ENCODE measurements at regions of chr15 and their contacts with region 1.

Region 1: GRCh38 chr15:30985081-30985531 is 6.3 kb downstream of the MTMR10 start:
- DNase-seq: no peak
- H3K4me3 ChIP-seq: peak overlapping the region in 1 of 4 donors; percentile 4
- H3K27ac ChIP-seq: peak overlapping the region; percentile 21 to 52 (median 48)
- H3K4me1 ChIP-seq: peaks cover 55 to 77% (median 66%) of the 10 kb centered on the region in 4 donors
- H3K27me3 ChIP-seq: no peaks in the 10 kb centered on the region
- CTCF ChIP-seq: no peak
- EP300 ChIP-seq: no peak
- POLR2A ChIP-seq: no peak

Region 2: GRCh38 chr15:30953731-30954378 is 31.3 kb before region 1 on chr15:
- intact Hi-C with region 1: no loop called
- DNase-seq: no peak
- H3K4me3 ChIP-seq: no peak overlapping the region
- H3K27ac ChIP-seq: no peak overlapping the region
- H3K4me1 ChIP-seq: peaks cover 0 to 8% (median 6%) of the 10 kb centered on the region in 4 donors
- H3K27me3 ChIP-seq: no peaks in the 10 kb centered on the region
- CTCF ChIP-seq: no peak
- EP300 ChIP-seq: no peak
- POLR2A ChIP-seq: no peak

Region 3: DNA sequence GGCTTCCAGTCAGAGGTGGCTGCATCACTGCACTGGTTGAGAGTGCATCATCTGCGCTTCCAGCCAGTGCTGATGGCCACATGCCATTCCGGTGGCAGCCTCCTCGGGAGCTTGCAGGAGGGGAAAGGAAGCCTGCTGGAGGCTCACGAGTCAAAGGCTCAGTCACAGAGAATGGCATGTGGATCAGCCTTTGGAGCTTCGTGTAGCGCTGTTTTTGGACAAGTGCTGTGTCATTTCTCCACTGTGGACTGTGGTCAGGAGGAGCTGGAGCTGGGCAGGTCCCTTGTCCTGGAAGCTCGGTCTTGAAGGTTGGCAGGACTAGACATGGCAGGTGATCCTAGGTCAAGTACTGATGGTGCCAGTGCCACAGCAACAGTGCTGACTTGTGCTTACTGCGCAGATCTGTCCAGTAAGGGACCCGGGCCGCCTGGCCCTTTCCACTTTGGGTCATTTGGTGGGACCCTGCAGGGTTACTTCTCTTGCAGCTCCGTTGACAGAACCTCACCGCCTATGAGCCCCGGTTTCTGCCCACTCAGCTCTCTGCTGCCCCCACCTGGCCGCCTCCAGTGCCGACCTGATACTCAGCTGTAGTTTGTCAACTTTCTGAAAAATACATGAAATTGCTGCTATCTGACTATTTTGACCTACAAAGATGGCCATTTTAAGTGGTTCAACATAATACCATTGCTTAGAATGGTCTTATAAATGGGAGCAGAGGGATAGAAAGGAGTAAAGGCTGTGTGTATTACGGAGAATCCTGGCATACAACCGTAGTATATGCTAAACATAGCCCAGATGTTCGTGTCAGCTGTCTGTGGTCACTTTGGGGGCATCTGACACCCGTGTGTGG is 144.0 kb after region 1 on chr15:
- intact Hi-C with region 1: loop called (anchors 10 kb)
- DNase-seq: peak; percentile 92
- H3K4me3 ChIP-seq: no peak overlapping the region
- H3K27ac ChIP-seq: no peak overlapping the region
- H3K4me1 ChIP-seq: peaks cover 0 to 8% (median 5%) of the 10 kb centered on the region in 4 donors
- H3K27me3 ChIP-seq: peaks cover 0 to 8% (median 0%) of the 10 kb centered on the region in 4 donors
- CTCF ChIP-seq: peak; percentile 68 to 89 (median 74)
- EP300 ChIP-seq: no peak
- POLR2A ChIP-seq: no peak

Region 4: GRCh38 chr15:31228985-31229826 is 244.1 kb after region 1 on chr15:
- intact Hi-C with region 1: no loop called
- DNase-seq: no peak
- H3K4me3 ChIP-seq: no peak overlapping the region
- H3K27ac ChIP-seq: no peak overlapping the region
- H3K4me1 ChIP-seq: peaks cover 7 to 10% (median 8%) of the 10 kb centered on the region in 4 donors
- H3K27me3 ChIP-seq: peaks cover 0 to 20% (median 0%) of the 10 kb centered on the region in 4 donors
- CTCF ChIP-seq: no peak
- EP300 ChIP-seq: no peak
- POLR2A ChIP-seq: no peak